IMR-90 (cell line): ENCODE measurements at regions of chr3 and their contacts with region 1.

Region 1: DNA sequence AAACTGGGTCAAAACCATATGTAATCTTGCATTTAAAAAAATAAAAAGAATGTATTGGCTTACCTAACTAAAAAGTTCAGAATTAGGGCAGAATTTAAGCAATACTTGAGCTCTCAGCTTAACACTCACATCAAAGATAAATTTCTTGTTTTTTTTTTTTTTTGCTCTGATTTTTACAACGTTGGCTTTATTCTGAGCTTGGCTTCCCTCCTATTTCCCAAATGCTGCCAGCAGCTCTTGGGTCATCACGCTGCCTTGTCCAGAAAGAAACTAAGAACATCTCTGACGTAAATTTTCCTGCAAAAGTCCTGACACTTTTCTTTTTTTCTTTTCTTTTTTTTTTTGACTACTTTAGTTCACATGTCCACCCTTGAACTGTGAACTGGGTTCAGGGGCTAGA is 150.6 kb upstream of the TGFBR2 start:
- DNase-seq: no peak
- ATAC-seq: no peak
- H3K4me3 ChIP-seq: no peak overlapping the region
- H3K27ac ChIP-seq: no peak overlapping the region
- H3K4me1 ChIP-seq: no peaks in the 10 kb centered on the region
- H3K27me3 ChIP-seq: no peaks in the 10 kb centered on the region
- CTCF ChIP-seq: no peak
- POLR2A ChIP-seq: no peak
- RAD21 ChIP-seq: no peak

Region 2: GRCh38 chr3:30199096-30199759 is 256.6 kb before region 1 on chr3:
- CTCF ChIA-PET with region 1: no interaction called
- POLR2A ChIA-PET with region 1: no interaction called
- dilution Hi-C with region 1: no loop called
- in situ Hi-C with region 1: no loop called
- intact Hi-C with region 1: no loop called
- DNase-seq: peak; percentile 55
- ATAC-seq: peak; percentile 40; the same call in 1 of the 2 replicates
- H3K4me3 ChIP-seq: no peak overlapping the region
- H3K27ac ChIP-seq: no peak overlapping the region
- H3K4me1 ChIP-seq: peaks cover 6% of the 10 kb centered on the region
- H3K27me3 ChIP-seq: no peaks in the 10 kb centered on the region
- CTCF ChIP-seq: peak; percentile 84
- POLR2A ChIP-seq: no peak
- RAD21 ChIP-seq: peak; percentile 83

Region 3: DNA sequence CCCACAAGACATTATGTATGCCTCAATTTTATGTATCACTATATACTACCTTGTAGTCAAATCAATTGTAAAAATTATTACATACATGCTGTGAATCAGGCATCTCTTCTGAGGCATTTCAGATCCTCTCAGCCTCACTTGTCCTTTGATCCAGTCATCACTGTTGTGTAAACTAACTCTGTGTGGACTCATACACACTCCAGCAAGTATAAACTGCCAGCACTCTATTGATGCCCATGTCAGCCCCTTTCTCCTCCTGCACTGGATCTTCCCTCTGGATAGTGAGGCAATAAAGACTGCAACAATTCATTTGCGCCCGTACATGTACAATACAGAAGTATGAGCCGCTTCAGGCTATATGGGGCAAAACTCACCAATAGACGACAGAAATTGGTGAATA is 214.1 kb before region 1 on chr3:
- CTCF ChIA-PET with region 1: no interaction called
- POLR2A ChIA-PET with region 1: no interaction called
- dilution Hi-C with region 1: no loop called
- in situ Hi-C with region 1: no loop called
- intact Hi-C with region 1: no loop called
- DNase-seq: peak; percentile 78
- ATAC-seq: peak; percentile 96
- H3K4me3 ChIP-seq: no peak overlapping the region
- H3K27ac ChIP-seq: no peak overlapping the region
- H3K4me1 ChIP-seq: peaks cover 5% of the 10 kb centered on the region; the same call in 1 of the 2 replicates
- H3K27me3 ChIP-seq: no peaks in the 10 kb centered on the region
- CTCF ChIP-seq: no peak
- POLR2A ChIP-seq: no peak
- RAD21 ChIP-seq: no peak

Region 4: GRCh38 chr3:30370681-30371271 is 85.1 kb before region 1 on chr3:
- CTCF ChIA-PET with region 1: no interaction called
- POLR2A ChIA-PET with region 1: no interaction called
- dilution Hi-C with region 1: no loop called
- in situ Hi-C with region 1: no loop called
- intact Hi-C with region 1: no loop called
- DNase-seq: no peak
- ATAC-seq: peak; percentile 11; the same call in 1 of the 2 replicates
- H3K4me3 ChIP-seq: no peak overlapping the region
- H3K27ac ChIP-seq: no peak overlapping the region
- H3K4me1 ChIP-seq: peaks cover 2% of the 10 kb centered on the region
- H3K27me3 ChIP-seq: no peaks in the 10 kb centered on the region
- CTCF ChIP-seq: no peak
- POLR2A ChIP-seq: no peak
- RAD21 ChIP-seq: no peak

Region 5: DNA sequence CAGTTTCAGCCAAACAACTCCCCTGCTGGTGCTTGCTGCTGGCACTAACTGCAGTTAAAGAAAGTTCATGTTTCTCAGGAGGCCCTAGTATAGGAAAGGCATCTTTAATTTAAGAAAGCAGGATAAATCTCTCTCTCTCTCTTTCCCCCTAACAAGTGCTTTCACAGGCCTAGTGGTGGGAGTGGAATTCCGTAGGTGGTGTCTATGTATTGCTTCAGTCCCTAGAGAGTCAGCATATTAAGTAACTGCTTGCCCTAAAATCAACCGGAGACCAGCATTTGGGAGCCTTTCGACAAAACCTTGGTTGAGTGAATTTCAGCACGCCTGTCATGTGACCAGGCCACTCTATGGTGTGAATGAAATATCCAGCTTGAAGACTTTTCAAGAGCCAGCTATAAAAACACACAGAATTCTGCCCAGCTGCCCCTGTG is 18.7 kb before region 1 on chr3:
- CTCF ChIA-PET with region 1: interaction called, 10 read pairs
- POLR2A ChIA-PET with region 1: no interaction called
- dilution Hi-C with region 1: no loop called
- in situ Hi-C with region 1: no loop called
- intact Hi-C with region 1: no loop called
- DNase-seq: peak; percentile 62
- ATAC-seq: peak; percentile 53
- H3K4me3 ChIP-seq: no peak overlapping the region
- H3K27ac ChIP-seq: no peak overlapping the region
- H3K4me1 ChIP-seq: peaks cover 7% of the 10 kb centered on the region
- H3K27me3 ChIP-seq: no peaks in the 10 kb centered on the region
- CTCF ChIP-seq: no peak
- POLR2A ChIP-seq: no peak
- RAD21 ChIP-seq: no peak